Activated CD4-positive, alpha-beta T cell treated with anti-CD3 and anti-CD28 coated beads, Interleukin-2, amount 10 ng/mL, durations not matched to agents 24 days and 14 days (primary cell): ENCODE measurements at regions of chr22 and their contacts with region 1.

Region 1: DNA sequence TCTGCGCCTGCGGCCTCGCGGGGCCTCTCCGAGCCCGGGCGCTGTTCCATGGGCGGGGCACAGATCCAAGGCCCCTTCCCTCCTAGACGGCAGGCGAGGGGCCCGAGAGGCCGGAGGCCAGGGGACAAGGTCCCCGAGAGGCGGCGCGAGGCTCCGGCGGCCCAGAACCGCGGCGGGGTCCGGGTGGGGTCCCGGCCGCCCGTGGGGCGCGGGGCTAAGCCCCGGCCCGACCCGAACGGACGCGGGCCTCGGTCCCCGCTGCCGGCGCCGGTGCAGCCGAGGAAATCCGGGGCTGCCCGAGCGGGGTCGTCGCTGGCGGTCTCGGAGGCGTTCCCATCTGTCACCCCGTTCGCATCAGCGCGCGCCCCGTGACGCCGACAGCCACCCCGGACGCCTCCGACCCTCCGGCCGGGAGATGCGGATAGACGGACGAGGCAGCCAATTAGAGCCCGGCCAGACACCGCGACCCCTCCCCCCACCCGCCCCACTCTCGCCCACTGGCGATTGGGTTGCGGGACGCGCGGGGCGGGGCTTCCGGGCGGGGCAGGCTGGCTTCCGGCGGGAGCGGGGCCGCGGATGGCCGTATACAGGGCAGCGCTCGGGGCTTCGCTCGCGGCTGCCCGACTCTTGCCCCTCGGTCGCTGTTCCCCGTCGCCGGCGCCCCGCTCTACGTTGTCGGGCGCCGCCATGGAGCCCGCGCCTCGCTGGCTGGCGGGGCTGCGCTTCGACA is at the start of gene SELENOO:
- DNase-seq: peak; percentile 97
- H3K4me3 Mint-ChIP-seq: peak within 1 kb of the TSS; percentile 84
- H3K27ac Mint-ChIP-seq: peak within 1 kb of the TSS; percentile 45
- H3K4me1 Mint-ChIP-seq: peaks cover 19% of the 10 kb centered on the region
- H3K27me3 Mint-ChIP-seq: no peaks in the 10 kb centered on the region
- total RNA-seq, gene SELENOO: 24.0 and 25.2 TPM in 2 replicates

Region 2: GRCh38 chr22:50085211-50085972 is 115.2 kb before region 1 on chr22 and contains the start of gene MLC1:
- intact Hi-C with region 1: no loop called
- DNase-seq: peak; percentile 59
- H3K4me3 Mint-ChIP-seq: peak within 1 kb of the TSS; percentile 52
- H3K27ac Mint-ChIP-seq: no peak within 1 kb of the TSS
- H3K4me1 Mint-ChIP-seq: peaks cover 5% of the 10 kb centered on the region
- H3K27me3 Mint-ChIP-seq: peaks cover 17% of the 10 kb centered on the region
- total RNA-seq, gene MLC1: not detected in 2 replicates

Region 3: GRCh38 chr22:50185384-50186087 is 15.1 kb before region 1 on chr22 and contains the start of gene TRABD:
- intact Hi-C with region 1: loop called (anchors 1 kb)
- DNase-seq: peak; percentile 96
- H3K4me3 Mint-ChIP-seq: peak within 1 kb of the TSS; percentile 96
- H3K27ac Mint-ChIP-seq: peak within 1 kb of the TSS; percentile 92
- H3K4me1 Mint-ChIP-seq: peaks cover 19% of the 10 kb centered on the region
- H3K27me3 Mint-ChIP-seq: peaks cover 2% of the 10 kb centered on the region
- total RNA-seq, gene TRABD: 94.4 and 97.4 TPM in 2 replicates

Region 4: GRCh38 chr22:50244420-50245213 is 44.0 kb after region 1 on chr22 and contains the start of gene TUBGCP6:
- intact Hi-C with region 1: loop called (anchors 2 kb)
- DNase-seq: peak; percentile 98
- H3K4me3 Mint-ChIP-seq: peak within 1 kb of the TSS; percentile 97
- H3K27ac Mint-ChIP-seq: peak within 1 kb of the TSS; percentile 100
- H3K4me1 Mint-ChIP-seq: peaks cover 22% of the 10 kb centered on the region
- H3K27me3 Mint-ChIP-seq: peaks cover 2% of the 10 kb centered on the region
- total RNA-seq, gene TUBGCP6: 51.1 and 51.7 TPM in 2 replicates

Region 5: GRCh38 chr22:50306753-50307749 is 106.4 kb after region 1 on chr22 and contains the start of gene PLXNB2:
- intact Hi-C with region 1: no loop called
- DNase-seq: peak; percentile 77
- H3K4me3 Mint-ChIP-seq: peak within 1 kb of the TSS; percentile 69
- H3K27ac Mint-ChIP-seq: no peak within 1 kb of the TSS
- H3K4me1 Mint-ChIP-seq: peaks cover 10% of the 10 kb centered on the region
- H3K27me3 Mint-ChIP-seq: peaks cover 10% of the 10 kb centered on the region
- total RNA-seq, gene PLXNB2: 9.0 and 9.5 TPM in 2 replicates